ENCODE measurements at regions of chr12 and their contacts with region 1.

Region 1: GRCh38 chr12:49296034-49296835 is 1.3 kb downstream of the PRPH start:
- DNase-seq: peak in 1 of 2 donors; percentile 55
- H3K4me3 ChIP-seq: peak overlapping the region in 1 of 2 donors; percentile 23
- H3K27ac ChIP-seq: no peak overlapping the region
- H3K4me1 ChIP-seq: peaks cover 0 to 37% (median 29%) of the 10 kb centered on the region in 4 donors
- H3K27me3 ChIP-seq: peaks cover 0 to 69% of the 10 kb centered on the region in 2 donors
- CTCF ChIP-seq: peak; percentile 38 to 53

Region 2: GRCh38 chr12:49336645-49337584 is 40.7 kb after region 1 on chr12 and contains the start of gene C1QL4:
- intact Hi-C with region 1: loop called (anchors 5 kb)
- DNase-seq: peak; percentile 76 to 84
- H3K4me3 ChIP-seq: peak within 1 kb of the TSS; percentile 23 to 42
- H3K27ac ChIP-seq: no peak within 1 kb of the TSS
- H3K4me1 ChIP-seq: peaks cover 0 to 26% (median 11%) of the 10 kb centered on the region in 4 donors
- H3K27me3 ChIP-seq: peaks cover 5 to 78% of the 10 kb centered on the region in 2 donors
- CTCF ChIP-seq: peak; percentile 65 to 99

Region 3: DNA sequence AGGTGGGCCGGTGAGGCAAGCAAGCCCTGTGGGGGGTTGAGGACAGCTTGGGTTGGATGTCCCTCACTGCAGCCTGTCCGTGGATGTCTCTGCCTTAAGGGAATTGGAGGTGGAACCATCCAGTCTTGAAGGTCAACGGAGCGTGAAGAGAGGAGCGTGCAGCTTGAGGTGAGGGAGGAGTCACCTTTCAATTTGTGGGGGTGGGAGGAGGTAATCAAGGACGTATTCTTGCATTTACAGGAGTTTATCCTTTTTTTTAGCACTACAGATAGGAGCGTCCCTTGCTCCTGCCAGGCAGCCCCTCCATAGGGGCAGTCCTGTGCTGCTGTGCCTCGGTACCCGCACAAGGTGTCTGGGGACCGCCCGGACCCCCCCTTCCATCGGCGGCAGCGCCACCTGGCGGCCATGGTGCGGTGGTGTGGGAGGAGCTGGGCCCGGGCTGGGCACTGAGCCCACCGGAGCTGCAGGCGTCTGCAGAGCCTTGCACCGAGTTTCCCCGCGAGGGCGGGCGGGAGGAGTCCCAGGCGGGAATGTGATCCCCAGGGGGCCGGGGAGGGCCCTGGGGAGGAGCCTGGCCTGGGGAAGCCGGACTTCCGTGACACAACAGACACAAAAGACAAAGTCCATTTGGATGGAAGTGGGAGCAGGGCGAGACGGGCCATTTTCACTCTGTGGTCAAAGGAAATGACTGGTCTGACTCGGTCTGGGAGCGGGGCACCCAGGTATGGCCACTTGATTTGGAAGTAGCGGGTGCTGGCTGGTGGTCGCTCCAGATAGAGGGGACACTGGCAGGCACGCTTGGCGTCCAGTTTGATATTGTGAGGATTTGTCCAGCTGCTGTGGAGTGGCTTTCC is 51.4 kb after region 1 on chr12:
- intact Hi-C with region 1: no loop called
- DNase-seq: peak in 1 of 2 donors; percentile 84
- H3K4me3 ChIP-seq: peak overlapping the region in 1 of 2 donors; percentile 51
- H3K27ac ChIP-seq: no peak overlapping the region
- H3K4me1 ChIP-seq: peaks cover 7 to 47% (median 43%) of the 10 kb centered on the region in 4 donors
- H3K27me3 ChIP-seq: peaks cover 3 to 88% of the 10 kb centered on the region in 2 donors
- CTCF ChIP-seq: peak; percentile 82 to 92

Region 4: DNA sequence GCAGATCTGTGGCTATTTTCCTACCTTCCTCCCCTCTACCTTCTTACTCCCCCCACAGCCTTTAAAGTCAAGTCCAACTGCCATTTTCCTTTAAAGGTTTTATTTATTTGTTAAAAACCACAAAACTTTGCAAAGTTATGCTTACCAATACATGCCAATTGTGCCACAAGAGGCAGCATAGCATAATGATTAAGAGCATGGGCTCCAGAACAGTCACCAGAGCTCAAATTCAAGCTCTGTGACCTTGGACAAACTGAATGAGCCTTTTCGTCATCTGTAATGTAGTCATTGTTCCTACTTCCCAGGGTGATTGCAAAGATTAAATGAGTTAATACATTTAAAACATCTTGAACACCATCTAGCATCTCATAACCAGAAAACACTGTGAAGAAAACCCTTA is 424.0 kb after region 1 on chr12:
- intact Hi-C with region 1: loop called (anchors 10 kb)
- DNase-seq: no peak
- H3K4me3 ChIP-seq: no peak overlapping the region
- H3K27ac ChIP-seq: no peak overlapping the region
- H3K4me1 ChIP-seq: no peaks in the 10 kb centered on the region
- H3K27me3 ChIP-seq: peaks cover 0 to 19% of the 10 kb centered on the region in 2 donors
- CTCF ChIP-seq: no peak

Measured in tibial artery (tissue), 4 donors.